Left colon (tissue), 2 donors: ENCODE measurements at regions of chr13 and their contacts with region 1.

Region 1: DNA sequence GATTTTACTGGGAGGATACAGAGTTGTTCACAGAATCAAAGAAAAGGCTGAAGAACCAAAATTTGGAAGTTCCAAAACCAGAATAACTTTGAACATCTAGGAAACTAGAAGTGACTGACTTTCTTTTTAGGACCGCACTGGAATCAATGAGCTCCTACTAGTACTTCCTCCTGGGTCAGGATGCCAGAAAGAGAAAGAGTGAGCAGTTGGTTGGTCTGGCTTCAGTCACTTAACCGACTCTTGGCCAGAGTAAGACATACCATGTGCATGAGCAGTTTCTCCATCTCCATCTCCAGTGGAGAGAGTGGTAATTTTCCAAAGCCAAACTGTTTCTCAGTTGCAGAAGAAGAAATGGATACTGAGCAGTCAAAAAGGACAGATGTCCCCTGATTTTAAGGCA is 27.1 kb upstream of the MTUS2 start:
- DNase-seq: no peak
- ATAC-seq: no peak

Region 2: GRCh38 chr13:28679628-28680027 is 113.4 kb before region 1 on chr13:
- intact Hi-C with region 1: loop called in 1 of 2 experiments (anchors 10 kb)
- DNase-seq: no peak
- ATAC-seq: peak; percentile 62